K562 (cell line): ENCODE measurements at regions of chr3 and their contacts with region 1.

Region 1: DNA sequence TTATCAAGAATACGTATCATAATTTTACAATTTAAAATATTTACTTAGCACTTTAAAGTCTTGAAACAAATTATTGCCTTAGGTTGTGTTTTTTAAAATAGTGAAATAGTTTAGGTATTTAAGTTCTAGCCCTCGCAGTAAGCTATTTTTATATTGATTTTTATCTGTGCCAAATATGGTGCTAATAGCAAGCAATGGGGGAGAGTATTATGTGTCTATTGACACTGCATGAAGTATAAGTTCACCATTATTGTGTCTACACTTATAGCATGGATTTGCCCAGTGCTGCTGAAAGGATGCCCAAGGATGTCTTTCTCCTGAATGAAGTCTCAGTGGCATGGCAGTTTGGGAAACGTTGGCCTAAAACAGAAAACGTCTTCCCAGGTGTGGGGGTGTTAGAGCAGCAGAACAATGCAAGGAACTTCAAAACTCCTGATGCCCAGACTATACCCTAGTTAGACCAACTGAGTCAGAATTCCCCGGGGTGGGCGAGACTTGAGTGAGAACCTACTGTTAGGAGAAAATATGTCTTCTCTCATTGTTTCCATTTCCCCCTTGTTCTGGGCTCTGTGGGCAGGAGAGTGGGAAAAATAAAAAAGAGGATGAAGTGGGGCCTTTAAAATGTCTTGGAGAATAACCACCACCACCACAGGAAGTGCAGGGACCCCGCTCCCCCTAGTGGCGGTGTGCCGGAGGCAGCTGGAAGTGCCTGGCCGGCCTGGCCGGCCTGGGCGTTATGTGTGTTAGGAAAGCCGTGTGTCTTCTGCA is 104.2 kb upstream of the SLC7A14 start:
- DNase-seq: peak; percentile 81 to 90 (median 84)
- ATAC-seq: peak; percentile 100
- H3K4me3 ChIP-seq: no peak overlapping the region
- H3K27ac ChIP-seq: no peak overlapping the region
- H3K4me1 ChIP-seq: peaks cover 12 to 19% of the 10 kb centered on the region in 2 experiments
- H3K27me3 ChIP-seq: no peaks in the 10 kb centered on the region
- CTCF ChIP-seq: peak; percentile 88 to 95 (median 91)
- EP300 ChIP-seq: 0 out of 2 replicates have a peak, but pooled peaks have one; percentile 6
- POLR2A ChIP-seq: no peak
- RAD21 ChIP-seq: peak; percentile 92 to 94

Region 2: GRCh38 chr3:170499565-170500156 is 190.4 kb before region 1 on chr3:
- CTCF ChIA-PET with region 1: interaction called, 3 read pairs
- POLR2A ChIA-PET with region 1: no interaction called
- in situ Hi-C with region 1: no loop called
- intact Hi-C with region 1: loop called (anchors 10 kb)
- DNase-seq: peak; percentile 22 to 64 (median 44)
- ATAC-seq: peak; percentile 98
- H3K4me3 ChIP-seq: no peak overlapping the region
- H3K27ac ChIP-seq: no peak overlapping the region
- H3K4me1 ChIP-seq: peaks cover 0 to 10% of the 10 kb centered on the region in 2 experiments; a peak in 2 of 5 replicates
- H3K27me3 ChIP-seq: no peaks in the 10 kb centered on the region; a peak in 1 of 5 replicates
- CTCF ChIP-seq: peak; percentile 73 to 76 (median 75)
- EP300 ChIP-seq: no peak
- POLR2A ChIP-seq: no peak
- RAD21 ChIP-seq: peak; percentile 60 to 69

Region 3: DNA sequence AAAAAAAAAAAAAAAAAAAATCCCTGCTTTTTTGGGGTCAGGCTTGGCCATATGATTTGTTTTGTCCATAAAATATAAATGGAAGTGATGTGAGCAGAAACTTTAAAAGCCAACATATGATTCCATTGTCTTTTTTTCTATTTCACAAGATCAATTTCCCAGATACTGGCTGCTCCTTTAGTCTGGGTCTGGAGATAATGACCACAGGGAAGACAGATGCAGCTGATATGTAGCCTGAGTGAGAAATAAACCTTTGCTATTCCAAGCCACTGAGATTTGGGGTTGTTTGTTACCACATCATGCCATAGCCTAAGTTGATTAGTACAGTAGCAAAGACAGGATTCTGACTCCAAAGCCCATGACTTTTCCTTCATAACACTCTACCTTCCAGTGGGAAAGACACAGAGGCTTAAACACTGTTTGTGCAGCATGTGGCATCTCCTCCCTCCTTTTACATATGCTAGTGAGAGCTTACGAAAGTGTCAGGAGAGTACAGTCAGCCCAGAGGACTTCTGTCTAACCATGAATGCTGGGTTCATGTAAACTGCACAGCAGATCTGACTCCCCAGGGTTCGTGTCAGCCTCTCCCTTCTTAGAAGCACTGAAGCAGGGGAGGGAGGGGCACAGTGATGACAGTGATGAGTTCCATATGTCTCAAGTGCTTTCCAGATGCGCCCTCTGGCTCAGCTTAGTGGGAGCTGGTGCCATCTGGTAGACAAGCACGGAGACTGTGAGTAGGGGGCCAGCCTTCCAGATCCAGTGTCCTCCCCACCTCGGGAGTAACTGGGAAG is 67.5 kb before region 1 on chr3:
- CTCF ChIA-PET with region 1: no interaction called
- POLR2A ChIA-PET with region 1: no interaction called
- in situ Hi-C with region 1: no loop called
- intact Hi-C with region 1: loop called (anchors 5 kb)
- DNase-seq: peak; percentile 20 to 68 (median 44)
- ATAC-seq: peak; percentile 96
- H3K4me3 ChIP-seq: no peak overlapping the region
- H3K27ac ChIP-seq: no peak overlapping the region
- H3K4me1 ChIP-seq: peaks cover 4 to 8% of the 10 kb centered on the region in 2 experiments; a peak in 3 of 5 replicates
- H3K27me3 ChIP-seq: no peaks in the 10 kb centered on the region
- CTCF ChIP-seq: no peak
- EP300 ChIP-seq: no peak
- POLR2A ChIP-seq: no peak
- RAD21 ChIP-seq: no peak

Region 4: DNA sequence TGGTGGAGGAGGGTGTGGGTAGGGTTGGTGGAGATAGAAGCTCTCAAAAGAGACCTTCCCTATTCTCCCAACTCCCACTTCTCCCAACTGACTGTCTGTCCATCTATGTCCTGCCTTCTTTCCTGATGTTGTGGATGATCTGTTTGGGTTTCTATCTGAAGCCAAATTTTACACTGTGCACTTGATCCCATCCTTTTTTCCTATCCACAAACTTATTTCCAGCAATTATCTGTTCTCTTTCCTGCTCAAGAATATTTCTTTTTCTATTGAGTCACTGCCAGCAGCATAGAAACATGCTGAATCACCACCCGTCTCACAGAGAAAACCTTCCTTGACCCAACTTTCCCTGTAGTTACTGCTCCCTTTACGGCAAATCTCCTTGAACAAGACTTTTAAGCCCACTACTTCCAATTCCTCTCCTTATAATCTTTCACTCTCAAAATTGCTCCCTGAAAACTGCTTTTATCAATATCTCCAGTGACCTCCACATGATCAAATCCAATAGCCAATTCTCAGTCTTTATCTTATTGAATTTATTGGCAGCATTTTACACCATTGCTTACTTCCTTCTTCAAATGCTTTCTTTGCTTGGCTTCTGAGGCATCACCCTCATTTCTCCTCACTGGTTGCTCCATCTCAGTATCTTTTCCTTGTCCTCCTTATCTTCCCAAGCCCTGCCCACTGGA is 37.0 kb after region 1 on chr3:
- CTCF ChIA-PET with region 1: no interaction called
- POLR2A ChIA-PET with region 1: interaction called, 3 read pairs
- in situ Hi-C with region 1: no loop called
- intact Hi-C with region 1: loop called (anchors 2 kb)
- DNase-seq: peak; percentile 51 to 81 (median 60)
- ATAC-seq: peak; percentile 65
- H3K4me3 ChIP-seq: no peak overlapping the region
- H3K27ac ChIP-seq: peak overlapping the region; percentile 83
- H3K4me1 ChIP-seq: peaks cover 42 to 79% of the 10 kb centered on the region in 2 experiments
- H3K27me3 ChIP-seq: no peaks in the 10 kb centered on the region
- CTCF ChIP-seq: no peak
- EP300 ChIP-seq: peak; percentile 79
- POLR2A ChIP-seq: 0 out of 2 replicates have a peak, but pooled peaks have one; percentile 28
- RAD21 ChIP-seq: no peak